Heart left ventricle (tissue), 16 donors: ENCODE measurements at regions of chr11 and their contacts with region 1.

Region 1: DNA sequence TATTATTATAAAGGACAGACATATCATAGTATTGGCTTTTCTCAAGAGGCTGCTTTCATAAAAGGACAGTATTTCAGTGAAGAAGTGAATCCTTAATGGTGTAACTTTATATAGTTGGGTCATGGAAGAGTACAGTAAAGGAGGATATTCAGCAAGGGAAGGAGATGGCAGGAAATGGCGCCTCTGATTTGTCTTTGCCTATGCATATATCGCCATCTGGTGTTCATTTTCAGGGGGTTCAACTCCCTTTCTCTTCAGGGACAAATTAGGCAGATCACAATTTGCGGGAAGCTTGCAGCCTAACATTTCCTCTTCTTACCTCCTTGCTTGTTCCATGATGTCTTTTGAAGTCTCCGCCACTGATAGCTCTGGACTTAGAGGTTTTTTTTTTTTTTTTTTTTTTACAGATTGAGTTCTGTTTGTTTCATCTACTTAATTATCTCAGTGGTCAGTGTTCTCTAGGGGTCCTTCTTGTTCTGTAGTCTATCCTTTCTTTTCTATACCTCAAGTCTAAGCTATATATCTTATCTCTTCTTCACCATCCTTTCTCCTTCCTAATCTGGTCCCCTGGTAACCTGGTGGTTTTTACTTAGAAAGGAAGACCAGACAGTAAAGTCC is 21.8 kb upstream of the RRM1 start:
- DNase-seq: peak in 3 of 5 donors; percentile 51 to 75 (median 60)
- ATAC-seq: peak; percentile 75 to 95 (median 82)
- H3K4me3 ChIP-seq: no peak overlapping the region
- H3K27ac ChIP-seq: peak overlapping the region in 2 of 12 donors; percentile 2 to 17
- H3K4me1 ChIP-seq: peaks cover 0 to 19% (median 2%) of the 10 kb centered on the region in 12 donors
- H3K27me3 ChIP-seq: no peaks in the 10 kb centered on the region
- CTCF ChIP-seq: peak; percentile 74 to 92 (median 86)
- POLR2A ChIP-seq: no peak

Region 2: GRCh38 chr11:3849297-3849874 is 223.4 kb before region 1 on chr11:
- intact Hi-C with region 1: loop called (anchors 1 to 2 kb)
- DNase-seq: no peak
- ATAC-seq: peak in 3 of 4 donors; percentile 62 to 72 (median 70)
- H3K4me3 ChIP-seq: no peak overlapping the region
- H3K27ac ChIP-seq: no peak overlapping the region
- H3K4me1 ChIP-seq: peaks cover 0 to 17% (median under 1%) of the 10 kb centered on the region in 12 donors
- H3K27me3 ChIP-seq: no peaks in the 10 kb centered on the region
- CTCF ChIP-seq: peak; percentile 40 to 79 (median 71)
- POLR2A ChIP-seq: no peak

Region 3: GRCh38 chr11:3920148-3920852 is 152.5 kb before region 1 on chr11:
- intact Hi-C with region 1: no loop called
- DNase-seq: peak in 1 of 5 donors; percentile 40
- ATAC-seq: peak in 3 of 4 donors; percentile 24 to 62 (median 42)
- H3K4me3 ChIP-seq: no peak overlapping the region
- H3K27ac ChIP-seq: no peak overlapping the region
- H3K4me1 ChIP-seq: peaks cover 0 to 45% (median 0%) of the 10 kb centered on the region in 12 donors
- H3K27me3 ChIP-seq: no peaks in the 10 kb centered on the region
- CTCF ChIP-seq: no peak
- POLR2A ChIP-seq: no peak

Region 4: DNA sequence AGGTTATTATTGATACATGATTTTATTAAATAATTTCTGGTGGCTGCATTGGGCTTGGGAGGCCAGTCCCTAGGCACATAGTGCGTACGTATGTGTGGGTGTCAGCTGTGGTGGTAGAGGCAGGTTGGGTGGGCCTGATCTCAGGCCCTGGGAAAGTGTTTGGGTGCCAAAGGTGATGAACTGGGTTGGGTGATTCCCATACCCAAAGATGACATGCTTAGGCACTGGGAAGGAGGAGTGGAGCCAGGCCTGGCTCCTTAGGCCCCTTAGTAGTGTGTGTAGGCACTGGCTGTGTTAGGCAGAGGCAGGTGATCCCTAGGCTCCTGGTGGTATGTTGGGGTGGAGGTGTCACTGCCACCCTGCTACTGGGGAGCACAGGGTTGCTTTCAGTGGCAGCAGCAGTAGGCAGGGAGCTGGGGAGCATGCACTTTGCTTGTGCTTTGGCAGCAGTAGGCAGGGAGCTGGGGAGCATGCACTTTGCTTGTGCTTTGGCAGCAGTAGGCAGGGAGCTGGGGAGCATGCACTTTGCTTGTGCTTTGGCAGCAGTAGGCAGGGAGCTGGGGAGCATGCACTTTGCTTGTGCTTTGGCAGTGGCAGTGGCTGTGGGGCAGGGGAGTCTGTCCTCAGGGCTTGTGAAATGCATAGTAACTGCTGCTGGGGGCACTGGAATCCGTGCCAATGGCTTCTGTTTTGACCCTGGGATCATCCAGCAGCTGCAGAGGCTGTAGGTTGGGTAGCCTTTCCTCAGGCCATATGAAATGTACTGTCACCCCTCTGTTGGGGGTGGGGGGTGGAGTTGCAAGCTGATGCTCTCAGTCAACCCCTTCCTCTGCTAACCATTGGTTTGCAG is 106.3 kb after region 1 on chr11:
- intact Hi-C with region 1: no loop called
- DNase-seq: no peak
- ATAC-seq: no peak
- H3K4me3 ChIP-seq: no peak overlapping the region
- H3K27ac ChIP-seq: no peak overlapping the region
- H3K4me1 ChIP-seq: peaks cover 0 to under 1% (median 0%) of the 10 kb centered on the region in 12 donors
- H3K27me3 ChIP-seq: no peaks in the 10 kb centered on the region
- CTCF ChIP-seq: no peak
- POLR2A ChIP-seq: no peak